Left ventricle myocardium superior (tissue), 1 donor: ENCODE measurements at regions of chr15 and their contacts with region 1.

Region 1: GRCh38 chr15:32994810-32995424 is 199.6 kb downstream of the FMN1 start:
- DNase-seq: no peak
- ATAC-seq: no peak

Region 2: GRCh38 chr15:32669896-32670619 is 324.9 kb before region 1 on chr15:
- intact Hi-C with region 1: loop called (anchors 5 kb)
- DNase-seq: peak; percentile 38
- ATAC-seq: peak; percentile 77

Region 3: GRCh38 chr15:32844118-32844711 is 150.7 kb before region 1 on chr15:
- intact Hi-C with region 1: loop called (anchors 10 kb)
- DNase-seq: no peak
- ATAC-seq: no peak